ENCODE measurements at regions of chr3 and their contacts with region 1.

Region 1: DNA sequence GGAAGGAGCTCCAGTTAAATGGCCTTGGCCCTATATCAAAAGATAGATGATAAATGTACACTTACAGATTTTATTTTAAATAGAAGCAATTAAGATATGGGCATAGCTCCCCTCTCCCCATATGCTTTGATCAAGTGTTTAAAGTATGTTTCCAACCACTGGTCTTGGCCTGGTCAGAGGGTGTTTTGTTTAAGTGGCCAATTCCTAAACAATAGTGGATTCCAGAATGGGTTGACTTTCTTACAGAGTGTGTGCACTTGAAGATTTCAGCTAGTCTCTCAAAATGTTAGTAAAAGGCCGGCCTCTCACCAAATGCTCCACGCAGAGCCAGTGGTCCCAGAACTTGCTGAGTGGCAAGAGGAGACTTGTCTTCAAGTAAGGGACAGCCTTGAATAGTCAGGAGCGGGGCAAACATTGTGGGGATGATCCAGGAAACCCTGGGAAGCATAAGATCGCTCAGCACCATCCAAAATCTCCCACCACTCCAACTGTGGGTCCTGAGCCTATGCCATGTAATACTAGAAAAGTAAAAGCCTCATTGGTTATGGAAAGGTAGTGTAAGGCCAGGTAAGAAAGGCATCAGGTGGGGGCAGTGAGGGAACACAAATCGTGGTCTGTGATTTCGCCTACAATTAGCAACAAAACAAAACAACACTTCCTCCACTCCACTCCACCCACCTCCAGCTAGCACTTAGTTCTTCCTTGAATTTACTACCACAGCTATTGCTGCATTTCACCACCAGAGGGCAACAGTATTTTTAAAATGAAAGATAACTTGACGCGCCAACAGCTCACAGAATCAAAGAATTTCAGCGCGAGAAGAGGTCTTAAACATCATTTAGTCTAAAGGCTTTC is 4.8 kb downstream of the RARRES1 start:
- DNase-seq: peak; percentile 67
- ATAC-seq: peak; percentile 67
- H3K4me3 Mint-ChIP-seq: no peak overlapping the region
- H3K27ac Mint-ChIP-seq: no peak overlapping the region
- H3K4me1 Mint-ChIP-seq: peaks cover 27% of the 10 kb centered on the region
- H3K27me3 Mint-ChIP-seq: peaks cover 2% of the 10 kb centered on the region
- CTCF ChIP-seq: peak; percentile 70

Region 2: GRCh38 chr3:158713094-158713499 is 14.3 kb before region 1 on chr3:
- CTCF ChIA-PET with region 1: interaction called, 47 read pairs
- POLR2A ChIA-PET with region 1: no interaction called
- intact Hi-C with region 1: no loop called
- DNase-seq: no peak
- ATAC-seq: peak; percentile 66
- H3K4me3 Mint-ChIP-seq: no peak overlapping the region
- H3K27ac Mint-ChIP-seq: peak overlapping the region; percentile 57
- H3K4me1 Mint-ChIP-seq: peaks cover 31% of the 10 kb centered on the region
- H3K27me3 Mint-ChIP-seq: no peaks in the 10 kb centered on the region
- CTCF ChIP-seq: no peak

Region 3: DNA sequence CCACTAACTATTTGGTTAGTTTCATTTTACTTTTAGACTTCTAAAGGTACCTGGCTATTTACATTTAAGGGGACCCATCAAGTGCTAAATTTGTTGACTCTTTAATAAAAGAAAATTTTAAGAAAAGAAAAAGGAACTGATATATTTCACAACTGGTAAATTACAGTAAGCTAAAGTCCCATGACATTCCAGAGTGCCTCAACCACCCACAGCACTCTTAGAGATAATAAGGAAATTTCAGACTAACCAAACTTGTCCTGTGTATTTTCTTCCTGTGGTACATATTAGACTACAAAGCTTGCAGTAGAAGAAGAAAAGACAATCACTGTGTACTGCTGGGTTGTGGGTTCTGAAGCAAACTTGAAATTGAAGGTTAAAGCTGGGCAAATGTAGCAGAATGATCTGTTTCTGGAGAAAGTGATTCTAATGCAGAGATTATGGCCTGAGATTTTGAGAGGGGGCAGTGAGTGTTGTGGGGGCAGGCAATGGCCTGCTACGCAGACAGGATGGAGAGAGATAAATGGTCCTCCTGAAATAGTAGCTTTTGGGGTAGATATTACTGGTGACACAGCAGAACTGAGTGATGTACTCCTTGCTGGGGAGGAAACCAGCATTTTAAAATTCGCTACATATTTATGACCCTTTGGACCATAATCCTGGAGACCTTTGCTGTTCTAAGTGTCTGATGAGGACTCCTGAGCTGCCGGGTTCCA is 49.9 kb after region 1 on chr3:
- CTCF ChIA-PET with region 1: interaction called, 18 read pairs
- POLR2A ChIA-PET with region 1: no interaction called
- intact Hi-C with region 1: no loop called
- DNase-seq: no peak
- ATAC-seq: no peak
- H3K4me3 Mint-ChIP-seq: no peak overlapping the region
- H3K27ac Mint-ChIP-seq: no peak overlapping the region
- H3K4me1 Mint-ChIP-seq: peaks cover 5% of the 10 kb centered on the region
- H3K27me3 Mint-ChIP-seq: no peaks in the 10 kb centered on the region
- CTCF ChIP-seq: no peak

Region 4: GRCh38 chr3:158790901-158791589 is 63.6 kb after region 1 on chr3:
- CTCF ChIA-PET with region 1: interaction called, 118 read pairs
- POLR2A ChIA-PET with region 1: interaction called, 4 read pairs
- intact Hi-C with region 1: loop called (anchors 1 kb)
- DNase-seq: peak; percentile 47
- ATAC-seq: peak; percentile 90
- H3K4me3 Mint-ChIP-seq: peak overlapping the region; percentile 70
- H3K27ac Mint-ChIP-seq: peak overlapping the region; percentile 63
- H3K4me1 Mint-ChIP-seq: peaks cover 3% of the 10 kb centered on the region
- H3K27me3 Mint-ChIP-seq: no peaks in the 10 kb centered on the region
- CTCF ChIP-seq: peak; percentile 86

Measured in activated CD8-positive, alpha-beta T cell treated with anti-CD3 and anti-CD28 coated beads for 36 hours (primary cell).